ENCODE measurements at regions of chr16 and their contacts with region 1.

Region 1: GRCh38 chr16:51276336-51276735 is 125.3 kb upstream of the SALL1 start:
- DNase-seq: peak; percentile 24
- H3K4me3 ChIP-seq: no peak overlapping the region
- H3K27ac ChIP-seq: no peak overlapping the region
- H3K4me1 ChIP-seq: peaks cover 4% of the 10 kb centered on the region
- H3K27me3 ChIP-seq: no peaks in the 10 kb centered on the region
- CTCF ChIP-seq: no peak

Region 2: DNA sequence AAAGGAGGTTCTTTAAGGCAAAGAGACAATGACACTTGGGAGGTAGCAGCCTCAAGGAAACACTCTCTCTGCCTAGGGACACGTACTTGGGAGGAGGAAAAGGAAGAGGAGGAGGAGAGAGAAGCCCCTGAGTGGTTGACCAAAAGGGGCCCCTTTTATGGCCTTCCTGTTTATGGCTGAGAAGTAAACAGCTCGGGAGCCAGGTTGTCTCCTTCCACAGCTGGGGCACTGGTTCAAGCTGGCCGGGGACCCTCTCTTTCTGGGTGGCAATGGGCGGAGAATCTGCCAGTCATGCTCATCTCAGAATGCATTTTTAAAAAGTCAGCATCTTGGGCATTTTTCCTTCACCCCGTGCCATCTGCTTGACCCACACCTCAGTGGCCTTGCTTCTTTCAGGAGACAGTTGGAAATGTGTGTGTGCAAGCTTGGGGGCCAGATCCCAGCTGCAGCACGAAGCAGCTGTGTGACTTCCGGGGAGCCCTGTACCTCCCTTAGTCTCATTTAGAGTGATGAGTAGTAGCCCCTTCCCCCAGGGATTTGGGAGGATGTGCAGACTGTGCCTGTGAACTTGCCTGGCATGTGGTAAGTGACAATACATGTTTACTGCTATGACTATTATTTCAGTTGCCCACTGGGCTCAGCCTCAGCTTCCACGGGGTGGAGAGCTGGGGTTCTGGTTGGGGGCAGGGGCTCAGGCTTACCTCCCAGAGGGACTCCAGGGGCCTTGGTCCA is 91.5 kb before region 1 on chr16:
- CTCF ChIA-PET with region 1: no interaction called
- dilution Hi-C with region 1: loop called (anchors 5 kb)
- in situ Hi-C with region 1: no loop called
- intact Hi-C with region 1: no loop called
- DNase-seq: no peak
- H3K4me3 ChIP-seq: no peak overlapping the region
- H3K27ac ChIP-seq: no peak overlapping the region
- H3K4me1 ChIP-seq: no peaks in the 10 kb centered on the region
- H3K27me3 ChIP-seq: peaks cover 3% of the 10 kb centered on the region
- CTCF ChIP-seq: no peak

Region 3: GRCh38 chr16:51343411-51343810 is 67.1 kb after region 1 on chr16:
- CTCF ChIA-PET with region 1: no interaction called
- dilution Hi-C with region 1: no loop called
- in situ Hi-C with region 1: no loop called
- intact Hi-C with region 1: no loop called
- DNase-seq: peak; percentile 10
- H3K4me3 ChIP-seq: no peak overlapping the region
- H3K27ac ChIP-seq: no peak overlapping the region
- H3K4me1 ChIP-seq: no peaks in the 10 kb centered on the region
- H3K27me3 ChIP-seq: no peaks in the 10 kb centered on the region
- CTCF ChIP-seq: no peak

Region 4: GRCh38 chr16:51392521-51393187 is 116.3 kb after region 1 on chr16:
- CTCF ChIA-PET with region 1: no interaction called
- dilution Hi-C with region 1: no loop called
- in situ Hi-C with region 1: no loop called
- intact Hi-C with region 1: no loop called
- DNase-seq: peak; percentile 33
- H3K4me3 ChIP-seq: no peak overlapping the region
- H3K27ac ChIP-seq: no peak overlapping the region
- H3K4me1 ChIP-seq: no peaks in the 10 kb centered on the region
- H3K27me3 ChIP-seq: no peaks in the 10 kb centered on the region
- CTCF ChIP-seq: no peak

Region 5: DNA sequence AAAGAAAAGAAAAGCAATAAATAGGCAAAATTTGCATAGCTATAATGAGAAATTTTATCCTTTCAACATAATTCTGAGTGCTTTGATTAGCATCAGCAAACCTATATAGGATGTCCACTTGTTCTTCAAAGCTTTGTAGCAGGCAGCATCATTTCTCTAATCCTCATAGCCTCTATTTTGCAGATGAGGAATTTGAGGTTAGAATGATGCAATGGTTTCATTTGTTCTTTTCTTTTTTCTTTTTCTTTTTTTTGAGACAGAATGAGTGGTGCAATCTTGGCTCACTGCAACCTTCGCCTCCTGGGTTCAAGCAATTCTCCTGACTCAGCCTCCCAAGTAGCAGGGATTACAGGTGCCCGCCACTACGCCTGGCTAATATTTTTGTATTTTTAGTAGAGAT is 676.2 kb after region 1 on chr16:
- CTCF ChIA-PET with region 1: interaction called, 11 read pairs
- dilution Hi-C with region 1: no loop called
- in situ Hi-C with region 1: no loop called
- intact Hi-C with region 1: no loop called
- DNase-seq: no peak
- H3K4me3 ChIP-seq: no peak overlapping the region
- H3K27ac ChIP-seq: no peak overlapping the region
- H3K4me1 ChIP-seq: no peaks in the 10 kb centered on the region
- H3K27me3 ChIP-seq: peaks cover 4% of the 10 kb centered on the region
- CTCF ChIP-seq: no peak